ENCODE measurements at regions of chr13 and their contacts with region 1.

Region 1: DNA sequence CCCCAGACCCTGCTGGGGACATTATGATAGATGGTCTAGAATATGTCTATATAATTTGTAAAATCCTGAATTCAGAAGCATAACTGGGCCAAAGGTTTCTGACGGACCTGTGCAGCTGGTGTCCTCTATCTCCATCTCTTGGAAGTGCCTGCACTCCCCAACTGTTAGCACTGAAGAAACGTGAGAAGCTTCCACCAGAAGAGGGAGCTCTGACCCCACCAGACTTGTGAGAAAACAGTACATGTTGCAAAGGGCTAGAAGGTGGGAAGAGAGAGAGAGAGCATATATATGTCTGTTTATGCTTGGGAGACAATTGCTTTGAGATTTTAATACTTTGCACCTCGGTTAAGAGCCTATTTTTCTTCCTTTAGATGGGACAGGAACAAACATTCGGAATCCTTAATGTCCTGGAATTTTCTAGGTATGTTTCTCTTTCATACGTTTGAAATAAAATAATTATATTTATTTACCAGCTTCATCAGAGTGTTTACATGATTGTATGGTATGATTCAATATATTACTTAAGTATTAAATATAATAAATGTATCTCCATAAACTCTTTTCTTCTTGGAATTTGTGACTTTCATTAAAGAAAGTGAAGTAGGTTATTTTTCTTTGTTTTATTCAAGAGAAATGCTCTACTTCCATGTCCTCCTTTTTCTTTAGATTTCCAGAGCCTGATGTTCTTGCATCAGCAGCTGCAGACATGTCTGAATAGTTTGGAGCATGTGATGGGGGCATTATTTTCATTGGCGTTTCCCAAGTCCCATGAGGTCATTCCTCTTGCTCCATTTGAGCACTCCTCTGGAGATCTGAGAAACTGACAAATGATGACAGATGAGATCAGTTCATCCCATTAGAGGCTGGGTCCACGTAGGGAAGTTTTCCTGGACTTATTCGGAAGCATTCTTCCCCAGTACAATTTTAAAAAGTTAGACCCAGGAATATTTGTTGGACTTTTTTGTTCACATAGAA is 202.9 kb downstream of the ATP8A2 start:
- DNase-seq: peak; percentile 58 to 72 (median 68)
- H3K4me3 ChIP-seq: no peak overlapping the region
- H3K4me3 Mint-ChIP-seq: no peak overlapping the region
- H3K27ac ChIP-seq: no peak overlapping the region
- H3K27ac Mint-ChIP-seq: no peak overlapping the region
- H3K4me1 ChIP-seq: no peaks in the 10 kb centered on the region
- H3K4me1 Mint-ChIP-seq: peaks cover 0 to 2% (median 0%) of the 10 kb centered on the region in 4 donors
- H3K27me3 ChIP-seq: no peaks in the 10 kb centered on the region
- H3K27me3 Mint-ChIP-seq: peaks cover 20 to 37% of the 10 kb centered on the region in 2 donors

Region 2: GRCh38 chr13:24943136-24943535 is 631.6 kb before region 1 on chr13:
- CTCF ChIA-PET with region 1: no interaction called
- POLR2A ChIA-PET with region 1: no interaction called
- intact Hi-C with region 1: no loop called
- DNase-seq: no peak
- H3K4me3 ChIP-seq: no peak overlapping the region
- H3K4me3 Mint-ChIP-seq: no peak overlapping the region
- H3K27ac ChIP-seq: no peak overlapping the region
- H3K27ac Mint-ChIP-seq: no peak overlapping the region
- H3K4me1 ChIP-seq: no peaks in the 10 kb centered on the region
- H3K4me1 Mint-ChIP-seq: no peaks in the 10 kb centered on the region
- H3K27me3 ChIP-seq: no peaks in the 10 kb centered on the region
- H3K27me3 Mint-ChIP-seq: peaks cover 7 to 18% of the 10 kb centered on the region in 2 donors

Region 3: DNA sequence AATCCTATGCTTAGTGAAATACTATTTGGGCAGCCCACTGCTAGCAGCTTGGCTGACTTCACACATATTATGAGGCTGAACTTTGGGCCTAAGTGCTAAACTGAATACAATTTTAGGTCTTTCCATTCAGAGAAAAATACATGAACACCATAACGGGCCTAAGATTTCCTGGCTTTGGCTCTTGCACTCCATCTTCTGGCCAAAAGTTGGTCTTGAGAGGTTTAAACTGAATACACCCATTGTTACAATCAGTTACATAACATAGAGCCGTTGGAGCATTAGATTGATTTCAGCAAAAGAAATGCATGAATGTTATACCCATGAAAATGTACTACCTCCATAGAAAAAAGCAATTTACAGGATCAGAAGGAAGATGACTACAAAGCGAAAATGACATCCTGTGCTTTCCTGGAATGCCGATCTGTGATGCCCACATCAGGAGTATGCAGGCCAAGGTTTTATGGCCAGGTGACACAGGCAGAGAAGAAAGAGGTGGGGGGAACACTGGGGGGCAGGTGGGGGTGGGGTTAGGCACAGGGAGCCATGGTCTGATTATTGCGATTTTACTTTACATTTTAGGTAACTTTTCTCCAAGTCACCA is 488.2 kb after region 1 on chr13:
- CTCF ChIA-PET with region 1: interaction called, 11 read pairs
- POLR2A ChIA-PET with region 1: no interaction called
- intact Hi-C with region 1: loop called (anchors 1 kb)
- DNase-seq: peak; percentile 39 to 55 (median 52)
- H3K4me3 ChIP-seq: no peak overlapping the region
- H3K4me3 Mint-ChIP-seq: no peak overlapping the region
- H3K27ac ChIP-seq: no peak overlapping the region
- H3K27ac Mint-ChIP-seq: peak overlapping the region in 1 of 7 donors; percentile 69
- H3K4me1 ChIP-seq: no peaks in the 10 kb centered on the region
- H3K4me1 Mint-ChIP-seq: peaks cover 0 to 1% (median 0%) of the 10 kb centered on the region in 4 donors
- H3K27me3 ChIP-seq: no peaks in the 10 kb centered on the region
- H3K27me3 Mint-ChIP-seq: peaks cover 0 to 12% of the 10 kb centered on the region in 2 donors

Region 4: DNA sequence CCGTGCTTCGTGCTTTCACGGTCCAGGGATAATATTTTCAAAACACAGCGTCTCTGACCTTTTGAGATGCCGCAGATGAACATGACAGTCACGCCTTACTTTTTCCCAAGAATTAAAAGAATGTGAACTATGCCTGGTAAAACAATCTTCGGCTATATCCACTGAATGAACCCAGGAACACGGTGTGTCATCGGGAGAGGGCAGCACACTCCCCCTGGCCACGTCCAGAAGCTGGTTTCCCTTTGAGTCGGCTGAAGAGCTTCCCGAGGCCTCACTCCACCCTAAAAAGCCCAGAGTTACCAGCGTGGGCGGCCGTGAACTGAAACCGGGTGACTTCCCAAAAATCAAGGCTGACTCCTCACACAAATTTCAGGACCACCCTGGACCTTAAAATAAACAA is 500.0 kb after region 1 on chr13:
- CTCF ChIA-PET with region 1: interaction called, 11 read pairs
- POLR2A ChIA-PET with region 1: no interaction called
- intact Hi-C with region 1: loop called (anchors 1 kb)
- DNase-seq: no peak
- H3K4me3 ChIP-seq: no peak overlapping the region
- H3K4me3 Mint-ChIP-seq: no peak overlapping the region
- H3K27ac ChIP-seq: no peak overlapping the region
- H3K27ac Mint-ChIP-seq: no peak overlapping the region
- H3K4me1 ChIP-seq: no peaks in the 10 kb centered on the region
- H3K4me1 Mint-ChIP-seq: no peaks in the 10 kb centered on the region
- H3K27me3 ChIP-seq: no peaks in the 10 kb centered on the region
- H3K27me3 Mint-ChIP-seq: peaks cover 23 to 25% of the 10 kb centered on the region in 2 donors